HepG2 (cell line): ENCODE measurements at regions of chr19 and their contacts with region 1.

Region 1: DNA sequence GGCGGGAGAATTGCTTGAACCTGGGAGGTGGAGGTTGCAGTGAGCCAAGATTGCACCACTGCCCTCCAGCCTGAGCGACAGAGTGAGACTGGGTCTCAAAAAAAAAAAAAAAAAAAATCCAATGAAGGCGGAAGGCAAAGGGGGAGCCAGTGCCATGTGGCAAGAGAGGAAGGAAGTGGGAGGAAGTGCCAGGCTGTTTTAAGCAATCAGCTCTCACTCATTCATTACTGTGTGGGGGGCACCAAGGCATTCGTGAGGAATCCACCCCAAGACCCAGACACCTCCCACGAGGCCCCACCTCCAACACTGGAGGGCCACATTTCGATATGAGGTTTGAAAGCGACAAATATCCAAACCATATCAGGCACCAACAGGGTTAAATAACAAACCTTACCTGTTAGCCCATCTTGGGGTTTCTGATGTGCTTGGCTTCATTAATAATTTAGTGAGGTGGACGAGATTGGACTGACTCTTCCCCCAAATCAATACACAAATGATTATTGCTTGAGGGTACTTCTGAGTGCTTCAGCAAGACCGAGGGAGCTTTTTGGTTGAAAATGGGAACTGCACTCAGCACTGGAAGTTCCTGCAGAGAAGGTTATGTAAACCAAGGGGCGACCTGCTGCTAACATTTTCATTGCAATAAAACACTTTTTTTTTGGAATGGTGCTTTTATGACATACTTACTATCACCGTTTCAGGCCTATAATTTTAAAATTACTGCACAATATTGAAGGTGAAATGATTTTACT is 7.5 kb upstream of the LRP3 start:
- DNase-seq: no peak
- ATAC-seq: no peak
- H3K4me3 ChIP-seq: no peak overlapping the region
- H3K27ac ChIP-seq: no peak overlapping the region
- H3K4me1 ChIP-seq: no peaks in the 10 kb centered on the region
- H3K27me3 ChIP-seq: peaks cover 2 to 9% of the 10 kb centered on the region in 2 experiments; a peak in 1 of 5 replicates
- CTCF ChIP-seq: no peak
- EP300 ChIP-seq: no peak
- POLR2A ChIP-seq: no peak
- RAD21 ChIP-seq: no peak

Region 2: DNA sequence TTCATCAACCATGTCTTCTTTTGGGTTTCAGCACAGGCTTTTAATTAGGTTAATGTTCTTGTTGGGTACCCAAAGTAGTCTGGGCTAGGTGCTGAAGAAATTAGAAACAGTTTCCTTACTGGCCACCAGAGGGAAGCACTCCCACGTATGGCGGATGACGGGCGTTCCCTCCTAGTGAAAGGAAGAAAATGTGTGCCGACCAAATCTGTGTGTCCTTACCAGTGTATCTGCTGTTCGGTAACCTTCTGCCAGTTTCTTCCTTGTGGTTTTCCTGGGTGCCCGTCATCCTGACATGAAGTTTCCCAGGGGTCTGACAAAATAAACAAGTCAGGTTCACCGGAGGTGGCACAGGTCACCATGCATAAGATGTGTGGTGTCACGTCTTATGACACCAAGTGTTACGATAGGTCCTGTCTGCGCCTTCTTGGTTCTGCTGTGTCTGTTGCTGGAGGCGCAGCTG is 60.6 kb before region 1 on chr19:
- CTCF ChIA-PET with region 1: interaction called, 18 read pairs
- POLR2A ChIA-PET with region 1: no interaction called
- in situ Hi-C with region 1: no loop called
- intact Hi-C with region 1: no loop called
- DNase-seq: peak; percentile 36
- ATAC-seq: peak; percentile 79
- H3K4me3 ChIP-seq: no peak overlapping the region
- H3K27ac ChIP-seq: no peak overlapping the region
- H3K4me1 ChIP-seq: no peaks in the 10 kb centered on the region
- H3K27me3 ChIP-seq: no peaks in the 10 kb centered on the region
- CTCF ChIP-seq: peak; percentile 84
- EP300 ChIP-seq: no peak
- POLR2A ChIP-seq: no peak
- RAD21 ChIP-seq: peak; percentile 62

Region 3: GRCh38 chr19:33226550-33227241 is 40.1 kb after region 1 on chr19:
- CTCF ChIA-PET with region 1: no interaction called
- POLR2A ChIA-PET with region 1: no interaction called
- in situ Hi-C with region 1: no loop called
- intact Hi-C with region 1: no loop called
- DNase-seq: no peak
- ATAC-seq: 0 out of 3 replicates have a peak, but pooled peaks have one; percentile 9
- H3K4me3 ChIP-seq: no peak overlapping the region
- H3K27ac ChIP-seq: no peak overlapping the region
- H3K4me1 ChIP-seq: peaks cover 48% of the 10 kb centered on the region
- H3K27me3 ChIP-seq: peaks cover 2 to 3% of the 10 kb centered on the region in 2 experiments; a peak in 3 of 5 replicates
- CTCF ChIP-seq: no peak
- EP300 ChIP-seq: no peak
- POLR2A ChIP-seq: no peak
- RAD21 ChIP-seq: no peak